AG04450 (cell line): ENCODE measurements at regions of chr15 and their contacts with region 1.

Region 1: DNA sequence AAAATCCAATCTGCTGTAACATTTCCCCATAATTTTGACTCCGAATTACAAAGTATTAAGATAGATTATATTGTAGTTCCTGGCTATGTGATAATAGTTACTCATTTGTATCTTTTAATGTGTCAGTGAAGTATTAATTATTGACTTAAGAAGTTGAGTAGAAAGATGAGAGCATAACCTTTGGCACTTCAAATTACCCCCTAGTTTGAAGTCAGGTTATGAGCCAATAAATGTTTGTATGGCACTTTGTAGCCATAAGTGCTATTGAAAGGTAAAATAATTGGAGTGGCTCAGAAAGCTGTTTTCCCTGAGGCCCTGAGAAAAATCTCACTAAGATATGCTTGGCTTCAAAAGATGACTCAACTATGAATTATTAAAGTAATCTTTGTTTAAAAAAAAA is 31.0 kb downstream of the IREB2 start:
- DNase-seq: no peak
- H3K4me3 ChIP-seq: no peak overlapping the region
- H3K27ac ChIP-seq: no peak overlapping the region
- H3K27me3 ChIP-seq: no peaks in the 10 kb centered on the region
- CTCF ChIP-seq: no peak

Region 2: DNA sequence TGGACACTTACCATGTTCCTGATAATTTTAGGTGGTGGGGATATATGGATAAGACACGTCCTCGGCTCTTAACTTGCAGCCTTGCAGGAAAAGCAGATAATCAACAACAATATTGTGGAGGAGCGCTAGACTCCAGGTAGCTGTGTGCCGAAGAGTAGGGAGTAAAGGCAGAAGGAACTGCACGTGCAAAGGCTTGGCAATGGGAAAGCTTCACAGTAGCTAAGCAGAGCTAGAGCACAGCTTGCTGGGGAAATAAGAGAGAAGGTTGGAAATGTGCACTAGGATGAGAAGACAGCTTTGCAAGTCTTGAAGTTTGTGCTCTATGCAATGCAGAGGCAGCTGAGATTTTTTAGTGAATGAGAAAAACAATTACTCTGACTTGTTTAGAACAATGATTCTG is 83.6 kb after region 1 on chr15:
- CTCF ChIA-PET with region 1: no interaction called
- POLR2A ChIA-PET with region 1: interaction called, 10 read pairs
- DNase-seq: no peak
- H3K4me3 ChIP-seq: no peak overlapping the region
- H3K27ac ChIP-seq: no peak overlapping the region
- H3K27me3 ChIP-seq: no peaks in the 10 kb centered on the region
- CTCF ChIP-seq: no peak